ENCODE measurements at regions of chr12 and their contacts with region 1.

Region 1: DNA sequence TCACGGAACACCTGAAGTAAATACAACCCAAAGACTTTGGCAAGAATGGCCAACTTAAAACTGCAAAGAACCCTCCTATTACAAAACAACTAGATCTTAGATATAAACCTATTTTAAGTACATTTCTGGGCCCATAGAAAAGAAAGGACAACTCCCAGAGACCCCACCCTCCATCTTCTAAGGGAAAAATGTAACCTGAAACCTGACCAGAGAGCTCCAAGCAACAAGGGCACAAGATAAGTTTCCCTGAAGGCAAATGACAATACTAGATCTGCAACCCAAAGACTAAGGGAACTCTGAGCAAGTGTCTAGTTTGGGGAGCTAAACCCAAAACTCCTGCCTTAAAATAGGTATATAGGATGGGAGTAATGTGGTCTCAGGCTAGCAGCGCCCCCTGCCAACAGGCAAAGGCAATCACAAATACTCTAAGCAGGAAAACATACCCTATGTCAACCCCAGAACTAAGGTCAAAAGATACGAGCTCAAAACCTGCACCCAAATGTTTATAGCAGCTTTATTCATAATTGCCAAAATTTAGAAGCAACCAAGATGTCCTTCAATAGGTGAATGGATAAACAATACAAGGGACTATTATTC is 218.9 kb downstream of the ITPR2 start:
- DNase-seq: peak; percentile 32 to 82 (median 54)

Region 2: GRCh38 chr12:26113853-26114719 is 500.0 kb before region 1 on chr12:
- intact Hi-C with region 1: loop called (anchors 10 kb)
- DNase-seq: peak; percentile 77 to 97 (median 92)

Region 3: DNA sequence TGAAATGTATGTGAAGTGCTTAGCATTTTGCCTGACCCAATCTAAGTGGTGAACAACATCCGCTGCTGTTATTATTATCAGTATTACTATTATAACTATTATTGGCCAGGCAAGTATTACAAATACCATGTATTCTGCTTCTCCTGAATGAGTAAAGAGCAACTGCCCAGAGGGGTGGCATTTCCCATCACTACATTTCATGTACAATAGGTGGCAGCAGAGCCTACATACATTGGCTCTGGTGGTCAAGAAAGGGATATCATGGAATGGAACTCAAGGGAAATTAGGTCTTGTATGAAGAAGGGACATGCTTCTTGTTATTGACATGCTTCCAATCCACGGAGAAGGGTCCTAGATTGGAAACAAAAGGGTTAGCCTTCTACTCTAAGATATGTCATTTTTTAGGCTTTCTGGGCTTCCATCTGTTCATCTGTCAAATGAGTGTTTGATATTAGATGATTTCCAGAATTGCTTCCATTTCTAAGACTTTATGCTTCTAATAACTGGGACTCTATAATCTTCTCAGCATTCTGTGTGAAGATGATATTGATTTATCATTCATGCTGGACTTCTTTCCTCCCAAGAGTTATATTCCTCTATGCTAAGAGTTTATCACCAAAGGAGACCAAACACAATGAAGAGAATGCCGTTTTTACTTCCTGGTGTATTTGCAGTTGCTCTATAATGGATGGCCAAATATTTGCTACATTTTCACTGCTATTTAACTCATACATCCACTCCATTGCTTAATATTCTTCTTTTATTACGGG is 179.6 kb before region 1 on chr12:
- intact Hi-C with region 1: loop called (anchors 10 kb)
- DNase-seq: peak in 24 of 42 donors; percentile 10 to 73 (median 24)